Activated B cell treated with CpG ODN at 0.5 μM for 24 hours (primary cell): ENCODE measurements at regions of chr11 and their contacts with region 1.

Region 1: GRCh38 chr11:92580908-92581307 is 356.3 kb downstream of the FAT3 start:
- DNase-seq: no peak
- ATAC-seq: no peak
- H3K4me3 Mint-ChIP-seq: no peak overlapping the region
- H3K27ac Mint-ChIP-seq: no peak overlapping the region
- H3K4me1 Mint-ChIP-seq: no peaks in the 10 kb centered on the region
- H3K27me3 Mint-ChIP-seq: no peaks in the 10 kb centered on the region
- CTCF ChIP-seq: no peak

Region 2: GRCh38 chr11:92611157-92611556 is 30.2 kb after region 1 on chr11:
- CTCF ChIA-PET with region 1: no interaction called
- POLR2A ChIA-PET with region 1: no interaction called
- intact Hi-C with region 1: no loop called
- DNase-seq: no peak
- ATAC-seq: no peak
- H3K4me3 Mint-ChIP-seq: no peak overlapping the region
- H3K27ac Mint-ChIP-seq: no peak overlapping the region
- H3K4me1 Mint-ChIP-seq: no peaks in the 10 kb centered on the region
- H3K27me3 Mint-ChIP-seq: no peaks in the 10 kb centered on the region
- CTCF ChIP-seq: no peak

Region 3: DNA sequence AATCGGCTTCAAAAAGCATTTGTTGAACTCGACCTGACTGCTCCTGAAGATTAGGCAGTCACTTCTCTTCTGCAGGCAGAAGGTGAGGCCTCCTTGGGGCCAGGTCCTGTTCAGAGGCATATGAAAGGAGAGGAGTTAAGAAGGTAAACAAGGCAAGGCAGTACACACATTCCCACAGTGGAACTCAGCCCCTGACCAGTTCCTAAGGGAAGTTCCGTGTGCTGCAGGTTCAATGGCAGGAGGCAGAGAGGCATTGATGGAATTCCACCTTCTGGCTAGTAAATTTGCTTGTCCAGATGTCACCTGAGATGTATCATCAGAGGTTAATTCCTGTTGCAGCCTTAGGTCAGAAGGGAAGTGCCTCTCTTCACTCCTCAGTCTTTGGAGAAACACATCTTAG is 51.6 kb after region 1 on chr11:
- CTCF ChIA-PET with region 1: no interaction called
- POLR2A ChIA-PET with region 1: no interaction called
- intact Hi-C with region 1: loop called (anchors 10 kb)
- DNase-seq: no peak
- ATAC-seq: no peak
- H3K4me3 Mint-ChIP-seq: no peak overlapping the region
- H3K27ac Mint-ChIP-seq: no peak overlapping the region
- H3K4me1 Mint-ChIP-seq: no peaks in the 10 kb centered on the region
- H3K27me3 Mint-ChIP-seq: no peaks in the 10 kb centered on the region
- CTCF ChIP-seq: no peak